Activated T-helper 1 cell treated with anti-CD3 and anti-CD28 coated beads, Interleukin-12 subunit alpha, Interleukin-12 subunit beta, Interleukin-2, Interleukin-4 antibody, amounts not matched to agents 30 ng/mL and 10 ng/mL and 1 ng/mL, durations not matched to agents 14 hours and 24 hours and 36 hours (primary cell): ENCODE measurements at regions of chr2 and their contacts with region 1.

Region 1: DNA sequence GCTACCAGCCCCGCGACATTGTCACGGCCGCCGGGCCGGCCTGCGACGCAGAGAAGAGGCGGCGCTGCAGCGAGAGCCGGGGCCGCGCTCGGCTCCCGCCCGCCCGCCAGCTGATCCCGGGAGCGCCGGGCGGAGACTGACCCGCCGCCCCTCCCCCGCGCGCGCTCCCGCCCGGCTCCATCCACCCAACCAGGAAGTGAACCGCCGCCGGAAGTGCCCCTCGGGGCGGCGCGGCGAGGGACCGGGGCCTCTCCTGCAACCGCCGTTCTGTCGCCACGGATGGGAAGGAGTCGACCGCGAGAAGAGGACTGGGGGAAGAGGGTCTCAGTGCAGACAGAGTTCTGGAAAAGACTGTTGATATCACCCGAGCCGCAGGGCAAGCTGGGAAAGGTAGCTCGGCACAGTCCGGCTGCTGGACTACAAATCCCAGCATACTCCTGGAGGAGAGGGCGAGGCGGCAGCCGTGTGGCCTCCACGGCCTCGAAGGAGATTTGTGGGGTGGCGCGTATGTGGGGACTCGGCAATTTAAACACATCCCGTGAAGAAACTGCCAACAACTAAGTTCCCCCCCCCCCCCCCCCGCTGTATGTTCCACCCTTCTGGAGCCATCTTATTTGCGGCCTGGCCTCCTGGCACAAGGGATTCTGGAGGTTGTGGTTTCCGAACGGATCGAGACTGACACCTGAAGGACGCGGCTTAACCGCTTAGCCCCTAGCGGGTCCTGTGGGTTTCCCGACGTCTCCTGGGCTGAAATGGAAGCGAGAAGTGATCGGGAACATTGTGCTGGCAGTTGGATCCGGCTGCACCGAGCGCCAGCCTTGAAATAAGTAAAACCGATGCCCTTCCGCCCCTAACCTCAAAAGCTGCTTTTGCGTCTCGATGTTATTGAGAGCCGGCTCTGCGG is at the start of gene AAK1:
- DNase-seq: peak; percentile 76
- H3K4me3 Mint-ChIP-seq: peak within 1 kb of the TSS; percentile 92
- H3K27ac Mint-ChIP-seq: peak within 1 kb of the TSS; percentile 95
- H3K4me1 Mint-ChIP-seq: peaks cover 71% of the 10 kb centered on the region
- H3K27me3 Mint-ChIP-seq: no peaks in the 10 kb centered on the region
- total RNA-seq, gene AAK1: 89.2 and 94.0 TPM in 2 replicates

Region 2: DNA sequence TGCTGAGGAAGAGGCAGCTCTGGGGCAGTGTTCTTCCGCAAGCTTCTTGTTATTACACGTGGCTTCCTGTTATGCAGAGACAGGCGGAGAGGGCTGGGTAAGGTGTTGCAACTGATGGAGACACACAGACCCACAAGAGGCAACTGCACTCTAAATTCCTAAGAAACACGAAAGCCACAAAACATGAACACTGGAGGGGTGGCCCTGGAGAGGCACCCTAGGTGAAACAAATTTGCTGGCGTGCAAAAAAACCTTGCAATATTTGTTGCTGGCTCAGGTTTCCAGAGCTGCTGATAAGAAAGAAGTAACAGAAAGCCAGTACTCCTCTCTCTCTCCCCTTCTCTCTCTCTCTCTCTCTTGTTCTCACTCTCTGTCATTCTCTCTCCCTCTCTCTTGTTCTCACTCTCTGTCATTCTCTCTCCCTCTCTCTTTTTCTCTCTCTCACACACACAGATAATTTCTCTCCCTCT is 877.4 kb before region 1 on chr2:
- intact Hi-C with region 1: loop called (anchors 2 kb)
- DNase-seq: peak; percentile 75
- H3K4me3 Mint-ChIP-seq: peak overlapping the region; percentile 65
- H3K27ac Mint-ChIP-seq: peak overlapping the region; percentile 92
- H3K4me1 Mint-ChIP-seq: peaks cover 96% of the 10 kb centered on the region
- H3K27me3 Mint-ChIP-seq: no peaks in the 10 kb centered on the region

Region 3: GRCh38 chr2:69565431-69565839 is 78.4 kb before region 1 on chr2:
- intact Hi-C with region 1: loop called (anchors 1 kb)
- DNase-seq: peak; percentile 58
- H3K4me3 Mint-ChIP-seq: no peak overlapping the region
- H3K27ac Mint-ChIP-seq: no peak overlapping the region
- H3K4me1 Mint-ChIP-seq: peaks cover 66% of the 10 kb centered on the region
- H3K27me3 Mint-ChIP-seq: no peaks in the 10 kb centered on the region

Region 4: GRCh38 chr2:69674316-69674670 is 30.4 kb after region 1 on chr2:
- intact Hi-C with region 1: loop called (anchors 1 kb)
- DNase-seq: no peak
- H3K4me3 Mint-ChIP-seq: no peak overlapping the region
- H3K27ac Mint-ChIP-seq: no peak overlapping the region
- H3K4me1 Mint-ChIP-seq: peaks cover 24% of the 10 kb centered on the region
- H3K27me3 Mint-ChIP-seq: no peaks in the 10 kb centered on the region

Region 5: GRCh38 chr2:69829256-69830046 is 185.6 kb after region 1 on chr2 and contains the start of gene GMCL1:
- intact Hi-C with region 1: loop called (anchors 1 kb)
- DNase-seq: peak; percentile 99
- H3K4me3 Mint-ChIP-seq: peak within 1 kb of the TSS; percentile 98
- H3K27ac Mint-ChIP-seq: peak within 1 kb of the TSS; percentile 95
- H3K4me1 Mint-ChIP-seq: peaks cover 59% of the 10 kb centered on the region
- H3K27me3 Mint-ChIP-seq: no peaks in the 10 kb centered on the region
- total RNA-seq, gene GMCL1: 25.6 and 32.8 TPM in 2 replicates

Region 6: GRCh38 chr2:70142590-70143313 is 498.9 kb after region 1 on chr2:
- intact Hi-C with region 1: loop called (anchors 1 kb)
- DNase-seq: peak; percentile 100
- H3K4me3 Mint-ChIP-seq: peak overlapping the region; percentile 80
- H3K27ac Mint-ChIP-seq: peak overlapping the region; percentile 91
- H3K4me1 Mint-ChIP-seq: peaks cover 58% of the 10 kb centered on the region
- H3K27me3 Mint-ChIP-seq: no peaks in the 10 kb centered on the region